MCF 10A (cell line): ENCODE measurements at regions of chr3 and their contacts with region 1.

Region 1: GRCh38 chr3:119034256-119035013 is at the start of gene IGSF11:
- DNase-seq: peak; percentile 32
- H3K4me3 Mint-ChIP-seq: peak within 1 kb of the TSS; percentile 64
- H3K27ac Mint-ChIP-seq: no peak within 1 kb of the TSS
- H3K4me1 Mint-ChIP-seq: no peaks in the 10 kb centered on the region
- H3K27me3 Mint-ChIP-seq: peaks cover 82% of the 10 kb centered on the region
- CTCF ChIP-seq: peak; percentile 45
- total RNA-seq, gene IGSF11: not detected in 2 replicates

Region 2: DNA sequence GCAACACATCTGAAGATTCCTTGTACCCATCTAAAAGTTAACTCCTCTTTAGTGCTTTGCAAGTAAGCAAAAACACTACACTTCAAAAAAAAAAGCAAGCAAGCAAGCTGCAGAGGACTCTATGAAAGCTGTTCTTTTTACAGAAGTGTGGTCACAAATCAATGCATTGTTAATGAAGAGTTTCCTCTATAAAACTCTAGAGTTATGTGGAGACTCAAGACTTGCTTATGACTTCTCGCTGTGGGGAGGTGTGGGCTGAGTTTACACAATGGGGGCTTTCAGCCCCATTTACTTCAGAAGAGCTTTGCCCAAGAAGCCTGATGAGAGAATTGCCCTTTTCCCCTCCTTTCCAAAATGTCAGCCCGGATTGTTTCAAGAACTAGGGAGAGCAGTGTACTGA is 144.2 kb before region 1 on chr3:
- CTCF ChIA-PET with region 1: interaction called, 325 read pairs
- POLR2A ChIA-PET with region 1: no interaction called
- intact Hi-C with region 1: no loop called
- DNase-seq: no peak
- H3K4me3 Mint-ChIP-seq: no peak overlapping the region
- H3K27ac Mint-ChIP-seq: no peak overlapping the region
- H3K4me1 Mint-ChIP-seq: no peaks in the 10 kb centered on the region
- H3K27me3 Mint-ChIP-seq: peaks cover 75% of the 10 kb centered on the region
- CTCF ChIP-seq: no peak

Region 3: GRCh38 chr3:118938183-118938961 is 96.1 kb before region 1 on chr3:
- CTCF ChIA-PET with region 1: interaction called, 10 read pairs
- POLR2A ChIA-PET with region 1: no interaction called
- intact Hi-C with region 1: no loop called
- DNase-seq: peak; percentile 63
- H3K4me3 Mint-ChIP-seq: peak overlapping the region; percentile 22
- H3K27ac Mint-ChIP-seq: no peak overlapping the region
- H3K4me1 Mint-ChIP-seq: peaks cover 14% of the 10 kb centered on the region
- H3K27me3 Mint-ChIP-seq: no peaks in the 10 kb centered on the region
- CTCF ChIP-seq: no peak

Region 4: GRCh38 chr3:119063471-119063870 is 29.0 kb after region 1 on chr3:
- CTCF ChIA-PET with region 1: interaction called, 11 read pairs
- POLR2A ChIA-PET with region 1: no interaction called
- intact Hi-C with region 1: no loop called
- DNase-seq: no peak
- H3K4me3 Mint-ChIP-seq: no peak overlapping the region
- H3K27ac Mint-ChIP-seq: no peak overlapping the region
- H3K4me1 Mint-ChIP-seq: no peaks in the 10 kb centered on the region
- H3K27me3 Mint-ChIP-seq: peaks cover 80% of the 10 kb centered on the region
- CTCF ChIP-seq: no peak

Region 5: DNA sequence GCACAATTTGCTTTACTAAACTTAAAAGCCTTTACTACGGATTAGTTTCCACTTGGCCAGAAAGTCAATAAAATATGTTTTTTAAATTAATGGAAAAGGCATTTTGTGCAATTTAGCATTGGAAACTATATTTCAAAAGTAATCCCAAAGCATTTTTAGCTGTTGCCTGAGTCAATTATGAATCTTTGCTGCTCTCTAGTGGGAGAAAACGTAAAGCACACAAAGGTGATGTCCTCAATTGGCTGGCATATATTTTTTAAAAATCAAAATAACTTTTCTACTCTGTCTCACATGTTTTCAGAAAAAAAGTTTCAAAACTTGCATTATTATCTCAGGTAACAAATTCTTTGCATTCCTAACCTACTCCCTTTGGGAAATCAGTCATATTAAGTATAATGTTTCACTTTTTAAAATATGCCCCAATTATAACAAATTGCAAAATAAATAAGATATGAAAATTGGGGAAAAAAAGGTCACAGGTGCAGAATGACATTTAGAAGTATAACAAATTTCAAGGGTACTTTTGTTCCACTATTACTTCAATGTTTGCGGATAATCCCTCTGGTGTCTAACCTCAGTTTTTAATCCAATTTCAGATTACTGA is 64.3 kb after region 1 on chr3:
- CTCF ChIA-PET with region 1: interaction called, 18 read pairs
- POLR2A ChIA-PET with region 1: no interaction called
- intact Hi-C with region 1: loop called (anchors 2 kb)
- DNase-seq: peak; percentile 56
- H3K4me3 Mint-ChIP-seq: no peak overlapping the region
- H3K27ac Mint-ChIP-seq: no peak overlapping the region
- H3K4me1 Mint-ChIP-seq: peaks cover 10% of the 10 kb centered on the region
- H3K27me3 Mint-ChIP-seq: no peaks in the 10 kb centered on the region
- CTCF ChIP-seq: peak; percentile 85